ENCODE measurements at regions of chr15 and their contacts with region 1.

Region 1: DNA sequence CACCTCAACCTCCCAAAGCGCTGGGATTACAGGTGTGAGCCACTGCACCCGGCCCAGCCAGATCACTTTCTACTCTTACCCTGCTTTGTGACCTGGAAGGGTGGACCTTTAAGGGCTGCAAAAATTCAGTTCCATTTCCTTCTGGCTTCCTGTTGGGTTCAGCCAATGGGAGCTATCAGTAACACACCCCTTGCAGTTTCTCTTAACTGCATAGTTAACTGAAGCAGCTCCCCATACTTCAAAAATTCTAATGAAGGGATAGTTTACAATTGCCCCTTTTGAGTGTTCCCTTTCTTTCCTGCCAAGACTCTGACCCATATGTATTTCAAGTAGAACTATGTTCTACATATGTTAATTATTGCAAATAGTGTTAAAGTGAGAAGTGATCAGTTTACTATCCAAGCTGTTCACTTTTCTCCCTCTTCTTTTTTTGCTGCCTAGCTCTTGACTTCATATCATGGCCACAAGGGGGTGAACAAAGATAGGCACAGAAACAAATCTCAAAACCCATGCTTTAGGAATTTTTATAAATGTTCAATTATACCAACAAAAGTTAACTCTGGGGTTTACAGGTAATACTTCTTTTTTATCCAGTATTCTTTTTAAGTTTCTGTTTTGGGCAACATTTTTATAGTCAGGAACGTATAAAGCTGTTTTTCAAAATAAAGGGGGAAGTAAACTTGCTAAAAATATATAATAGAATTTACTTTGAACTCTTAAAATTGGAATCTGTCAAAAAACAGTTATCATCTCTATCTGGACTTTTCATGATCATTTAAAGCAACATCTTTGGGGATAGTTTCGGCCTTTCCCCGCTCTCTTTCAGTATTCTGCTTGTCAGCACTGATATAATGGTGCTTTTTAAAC is 8.1 kb downstream of the PGBD4 start:
- DNase-seq: peak; percentile 16
- H3K4me3 ChIP-seq: no peak overlapping the region
- H3K27ac ChIP-seq: no peak overlapping the region
- H3K27me3 ChIP-seq: no peaks in the 10 kb centered on the region
- CTCF ChIP-seq: peak; percentile 85

Region 2: GRCh38 chr15:33959844-33960548 is 150.0 kb before region 1 on chr15:
- CTCF ChIA-PET with region 1: no interaction called
- POLR2A ChIA-PET with region 1: no interaction called
- DNase-seq: no peak
- H3K4me3 ChIP-seq: no peak overlapping the region
- H3K27ac ChIP-seq: no peak overlapping the region
- H3K27me3 ChIP-seq: no peaks in the 10 kb centered on the region
- CTCF ChIP-seq: no peak

Region 3: DNA sequence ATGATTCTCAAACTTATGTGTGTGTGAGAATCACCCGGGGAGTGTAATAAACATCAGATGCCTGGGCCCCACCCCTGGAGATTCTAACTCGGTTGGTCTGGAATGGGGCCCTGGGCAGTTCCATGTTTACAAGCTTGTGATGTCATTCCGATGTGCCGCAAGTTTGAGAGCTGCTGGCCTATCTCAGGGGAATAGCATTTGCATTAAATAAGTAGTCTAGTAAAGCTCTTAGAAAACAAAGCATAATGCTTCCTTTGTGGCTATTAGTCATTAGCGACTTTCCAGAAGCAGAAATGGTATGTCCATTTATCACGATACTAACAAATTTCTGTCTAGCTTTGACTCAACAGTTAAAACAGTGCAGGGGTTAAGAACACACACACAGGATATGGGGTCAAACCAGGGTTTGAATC is 12.7 kb after region 1 on chr15:
- CTCF ChIA-PET with region 1: interaction called, 33 read pairs
- POLR2A ChIA-PET with region 1: no interaction called
- DNase-seq: peak; percentile 78
- H3K4me3 ChIP-seq: no peak overlapping the region
- H3K27ac ChIP-seq: peak overlapping the region; percentile 58
- H3K27me3 ChIP-seq: no peaks in the 10 kb centered on the region
- CTCF ChIP-seq: no peak

Region 4: DNA sequence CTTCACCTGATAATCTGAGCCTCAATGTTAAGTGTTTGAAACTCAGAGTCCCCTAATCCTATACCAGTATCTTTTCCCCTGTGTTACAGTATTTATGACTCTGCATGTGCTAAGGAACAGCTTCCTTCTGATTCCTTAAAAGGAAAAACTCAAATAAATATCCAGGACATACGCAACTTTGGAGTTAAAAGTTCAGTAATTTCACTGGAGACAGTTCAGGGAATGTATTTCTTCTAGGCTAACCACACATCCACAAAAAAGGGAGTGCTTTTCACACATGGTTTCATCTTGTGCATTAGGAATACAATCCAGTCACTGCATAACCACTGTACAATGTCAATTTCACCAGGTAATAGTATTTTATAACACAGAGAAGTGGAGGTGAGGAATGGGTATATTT is 22.9 kb after region 1 on chr15:
- CTCF ChIA-PET with region 1: interaction called, 33 read pairs
- POLR2A ChIA-PET with region 1: no interaction called
- DNase-seq: no peak
- H3K4me3 ChIP-seq: no peak overlapping the region
- H3K27ac ChIP-seq: no peak overlapping the region
- H3K27me3 ChIP-seq: no peaks in the 10 kb centered on the region
- CTCF ChIP-seq: no peak

Region 5: GRCh38 chr15:34209421-34210282 is 99.6 kb after region 1 on chr15 and contains the start of gene KATNBL1:
- CTCF ChIA-PET with region 1: interaction called, 109 read pairs
- POLR2A ChIA-PET with region 1: interaction called, 16 read pairs
- DNase-seq: peak; percentile 79
- H3K4me3 ChIP-seq: peak within 1 kb of the TSS; percentile 78
- H3K27ac ChIP-seq: peak within 1 kb of the TSS; percentile 90
- H3K27me3 ChIP-seq: peaks cover 4% of the 10 kb centered on the region
- CTCF ChIP-seq: peak; percentile 89
- polyA plus RNA-seq, gene KATNBL1: 25.2 and 46.6 TPM in 2 replicates

Region 6: DNA sequence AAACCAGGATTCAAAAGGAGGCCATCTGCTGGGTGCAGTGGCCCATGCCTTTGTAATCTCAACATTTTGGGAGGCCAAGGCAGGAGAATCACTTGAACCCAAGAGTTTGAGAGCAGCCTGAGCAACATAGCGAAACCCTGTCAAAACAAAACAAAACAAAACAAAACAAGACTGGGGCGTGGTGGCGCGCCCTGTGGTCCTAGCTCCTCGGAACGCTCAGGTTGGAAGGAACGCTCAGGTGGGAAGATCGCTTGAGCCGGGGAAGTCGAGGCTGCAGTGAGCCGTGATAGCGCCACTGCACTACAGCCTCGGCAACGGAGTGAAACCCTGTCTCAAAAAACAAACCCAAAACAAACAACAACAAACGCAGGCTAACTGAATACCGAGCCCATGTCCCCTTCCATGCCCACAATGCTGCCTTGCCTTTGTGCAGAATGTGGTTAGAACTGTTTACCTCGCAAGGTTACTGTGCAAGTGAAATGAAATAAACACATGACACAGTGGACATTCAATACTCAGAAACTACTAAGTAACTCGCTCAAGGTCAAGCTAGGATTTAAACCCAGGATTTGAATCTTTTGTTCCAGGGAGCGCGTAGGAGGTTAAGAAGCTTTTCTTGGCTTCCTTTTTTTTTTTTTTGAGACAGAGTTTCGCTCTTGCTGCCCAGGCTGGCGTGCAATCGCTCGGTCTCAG is 114.0 kb after region 1 on chr15:
- CTCF ChIA-PET with region 1: interaction called, 15 read pairs
- POLR2A ChIA-PET with region 1: interaction called, 11 read pairs
- DNase-seq: no peak
- H3K4me3 ChIP-seq: peak overlapping the region; percentile 100
- H3K27ac ChIP-seq: peak overlapping the region; percentile 89
- H3K27me3 ChIP-seq: no peaks in the 10 kb centered on the region
- CTCF ChIP-seq: no peak

Region 7: DNA sequence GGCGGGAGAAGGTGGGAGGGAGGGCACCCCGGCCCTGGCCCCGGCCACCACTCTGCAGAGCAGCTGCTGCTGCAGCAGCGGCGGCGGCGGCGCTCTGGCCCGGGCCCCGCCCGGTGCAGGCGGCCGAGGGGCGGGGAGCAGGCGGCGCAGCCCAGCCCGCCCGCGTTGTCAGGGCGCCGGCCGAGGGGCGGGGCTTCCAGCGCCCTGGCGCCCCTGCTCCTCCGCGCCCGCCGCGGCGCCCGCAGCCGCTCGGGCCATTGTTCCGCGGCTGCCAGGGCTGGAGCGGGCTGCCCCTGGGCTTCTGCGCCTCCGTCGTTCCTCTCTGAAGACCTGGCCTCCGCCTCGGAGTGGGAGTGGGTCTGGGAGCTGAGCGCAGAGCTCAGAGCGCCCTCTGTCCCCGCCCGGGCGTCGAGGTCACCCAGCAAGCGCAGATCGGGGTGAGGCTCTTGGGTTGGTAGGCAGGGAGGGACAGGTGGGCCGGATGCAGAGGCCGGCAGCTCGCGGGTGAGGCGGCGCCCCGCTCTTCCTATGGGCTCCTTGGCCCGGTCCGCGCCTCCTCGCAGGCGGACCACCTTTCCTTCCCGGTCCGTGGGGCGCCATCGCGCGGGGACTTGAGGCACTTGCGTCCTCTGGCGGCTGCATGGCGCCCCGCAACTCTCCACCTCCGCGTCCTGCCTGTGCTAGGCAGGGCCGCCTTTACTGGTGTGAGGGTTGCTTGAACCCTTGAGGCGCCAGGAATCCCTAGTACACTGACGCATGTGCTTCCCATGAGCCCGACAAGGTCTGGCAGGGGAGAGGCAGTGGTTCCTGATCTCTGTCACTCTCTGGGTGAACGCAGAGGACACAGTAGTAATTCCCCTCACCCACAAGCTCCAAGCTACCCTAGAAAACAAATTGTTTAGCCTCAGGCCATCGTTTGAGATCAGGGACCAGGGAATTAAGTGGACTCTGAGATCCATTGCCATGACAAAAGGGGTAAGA is 257.4 kb after region 1 on chr15 and contains the start of gene LPCAT4:
- CTCF ChIA-PET with region 1: interaction called, 22 read pairs
- POLR2A ChIA-PET with region 1: no interaction called
- DNase-seq: peak; percentile 53
- H3K4me3 ChIP-seq: peak within 1 kb of the TSS; percentile 96
- H3K27ac ChIP-seq: peak within 1 kb of the TSS; percentile 80
- H3K27me3 ChIP-seq: no peaks in the 10 kb centered on the region
- CTCF ChIP-seq: peak; percentile 95
- polyA plus RNA-seq, gene LPCAT4: 20.4 and 23.2 TPM in 2 replicates

Region 8: GRCh38 chr15:34456658-34457057 is 346.6 kb after region 1 on chr15:
- CTCF ChIA-PET with region 1: no interaction called
- POLR2A ChIA-PET with region 1: no interaction called
- DNase-seq: no peak
- H3K4me3 ChIP-seq: no peak overlapping the region
- H3K27ac ChIP-seq: no peak overlapping the region
- H3K27me3 ChIP-seq: no peaks in the 10 kb centered on the region
- CTCF ChIP-seq: no peak

Region 9: GRCh38 chr15:34587717-34588674 is 478.0 kb after region 1 on chr15:
- CTCF ChIA-PET with region 1: interaction called, 16 read pairs
- POLR2A ChIA-PET with region 1: no interaction called
- DNase-seq: peak; percentile 68
- H3K4me3 ChIP-seq: peak overlapping the region; percentile 46
- H3K27ac ChIP-seq: no peak overlapping the region
- H3K27me3 ChIP-seq: no peaks in the 10 kb centered on the region
- CTCF ChIP-seq: peak; percentile 85